Activated CD4-positive, alpha-beta memory T cell treated with anti-CD3 and anti-CD28 coated beads for 36 hours (primary cell): ENCODE measurements at regions of chr5 and their contacts with region 1.

Region 1: DNA sequence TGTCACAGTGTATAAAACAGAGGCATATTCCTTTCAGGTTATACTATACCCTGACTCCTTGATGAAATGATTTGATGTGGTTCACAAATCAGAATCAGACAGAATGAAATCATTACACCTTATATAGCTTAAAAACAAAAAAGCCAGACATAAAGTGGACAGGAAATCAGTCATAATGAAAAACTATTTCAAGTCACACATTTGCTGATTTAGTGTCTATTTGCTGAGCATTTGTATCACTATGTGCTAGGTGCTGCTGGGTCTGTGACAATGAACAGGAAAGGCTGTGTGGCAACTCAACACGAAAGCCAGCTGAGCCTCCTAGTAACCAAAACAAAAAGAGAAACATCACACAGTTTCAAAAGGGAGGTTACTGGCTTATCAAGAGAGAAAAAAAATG is 194.0 kb downstream of the EFNA5 start:
- DNase-seq: peak; percentile 45
- H3K4me3 Mint-ChIP-seq: no peak overlapping the region
- H3K27ac Mint-ChIP-seq: no peak overlapping the region
- H3K4me1 Mint-ChIP-seq: peaks cover 2% of the 10 kb centered on the region
- H3K27me3 Mint-ChIP-seq: peaks cover 9% of the 10 kb centered on the region

Region 2: GRCh38 chr5:107289030-107289714 is 187.6 kb before region 1 on chr5:
- CTCF ChIA-PET with region 1: no interaction called
- POLR2A ChIA-PET with region 1: no interaction called
- intact Hi-C with region 1: loop called (anchors 2 kb)
- DNase-seq: no peak
- H3K4me3 Mint-ChIP-seq: no peak overlapping the region
- H3K27ac Mint-ChIP-seq: no peak overlapping the region
- H3K4me1 Mint-ChIP-seq: peaks cover 11% of the 10 kb centered on the region
- H3K27me3 Mint-ChIP-seq: peaks cover 10% of the 10 kb centered on the region

Region 3: GRCh38 chr5:107501965-107502675 is 25.3 kb after region 1 on chr5:
- CTCF ChIA-PET with region 1: no interaction called
- POLR2A ChIA-PET with region 1: no interaction called
- intact Hi-C with region 1: no loop called
- DNase-seq: no peak
- H3K4me3 Mint-ChIP-seq: no peak overlapping the region
- H3K27ac Mint-ChIP-seq: no peak overlapping the region
- H3K4me1 Mint-ChIP-seq: peaks cover 8% of the 10 kb centered on the region
- H3K27me3 Mint-ChIP-seq: peaks cover 18% of the 10 kb centered on the region